ACHN (cell line): ENCODE measurements at regions of chr5 and their contacts with region 1.

Region 1: DNA sequence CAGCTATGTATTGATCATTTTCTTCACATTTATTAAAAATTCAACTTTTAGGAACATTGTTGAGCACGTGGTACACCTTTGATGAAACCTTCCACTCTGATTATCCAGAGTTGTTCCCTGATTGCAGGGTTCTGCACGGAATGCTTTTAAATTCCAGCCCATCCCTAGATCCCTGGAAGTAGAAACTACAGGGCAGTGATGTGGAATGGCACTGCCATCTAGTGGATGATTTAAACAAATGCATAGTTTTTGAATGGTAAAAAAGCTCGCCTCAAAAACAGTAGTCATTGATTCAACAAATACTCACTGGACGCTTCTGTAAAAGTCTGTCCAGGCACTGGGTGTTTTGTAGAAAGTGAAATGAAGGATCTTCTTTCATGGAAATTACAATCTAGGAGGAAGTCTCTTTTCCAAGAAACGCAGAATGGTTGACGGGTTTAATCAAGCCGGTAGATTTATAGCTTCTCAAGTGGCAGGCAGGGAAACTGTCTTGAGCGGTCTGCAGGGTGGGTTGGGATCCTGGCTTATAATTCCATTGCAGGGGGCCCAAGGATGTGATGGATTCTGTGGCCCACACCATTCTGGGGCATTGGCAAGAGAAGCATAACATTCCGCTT is 118.4 kb downstream of the ARHGAP26 start:
- DNase-seq: peak; percentile 43

Region 2: DNA sequence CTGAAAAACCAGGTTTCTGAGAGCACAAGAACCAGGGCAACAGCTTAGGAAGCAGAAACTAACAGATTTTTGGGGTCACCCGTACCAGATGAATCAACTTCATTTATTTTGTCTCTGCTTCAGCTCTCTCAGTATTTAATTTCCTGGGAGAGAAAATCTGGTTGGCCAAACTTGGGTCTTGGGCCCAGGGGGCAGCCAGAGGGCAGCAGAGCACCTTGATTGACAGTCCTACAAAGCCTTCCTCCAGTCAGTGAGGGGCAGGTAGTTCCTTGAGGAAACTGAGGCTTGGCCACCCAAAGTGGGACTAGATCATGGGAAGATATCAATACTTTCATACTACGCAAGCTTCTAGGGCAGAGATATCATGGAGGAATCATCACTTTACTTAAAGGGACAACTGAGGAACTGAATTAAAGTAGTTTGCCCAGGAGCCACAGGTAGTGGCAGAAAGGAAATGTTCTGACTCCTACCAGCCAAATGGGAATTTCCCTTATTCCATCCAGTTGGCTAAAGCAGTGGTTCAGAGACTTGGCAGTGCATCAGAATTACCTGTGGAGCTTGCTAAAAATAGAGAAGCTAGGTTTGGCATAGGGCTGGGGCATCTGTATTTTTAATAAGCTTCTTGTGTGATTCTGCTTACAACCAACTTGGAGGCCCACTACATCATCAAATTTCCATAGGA is 139.9 kb before region 1 on chr5:
- in situ Hi-C with region 1: loop called (anchors 25 kb)
- DNase-seq: peak; percentile 60

Region 3: GRCh38 chr5:143016777-143017516 is 128.4 kb after region 1 on chr5:
- in situ Hi-C with region 1: no loop called
- DNase-seq: peak; percentile 10